ENCODE measurements at regions of chr1 and their contacts with region 1.

Region 1: DNA sequence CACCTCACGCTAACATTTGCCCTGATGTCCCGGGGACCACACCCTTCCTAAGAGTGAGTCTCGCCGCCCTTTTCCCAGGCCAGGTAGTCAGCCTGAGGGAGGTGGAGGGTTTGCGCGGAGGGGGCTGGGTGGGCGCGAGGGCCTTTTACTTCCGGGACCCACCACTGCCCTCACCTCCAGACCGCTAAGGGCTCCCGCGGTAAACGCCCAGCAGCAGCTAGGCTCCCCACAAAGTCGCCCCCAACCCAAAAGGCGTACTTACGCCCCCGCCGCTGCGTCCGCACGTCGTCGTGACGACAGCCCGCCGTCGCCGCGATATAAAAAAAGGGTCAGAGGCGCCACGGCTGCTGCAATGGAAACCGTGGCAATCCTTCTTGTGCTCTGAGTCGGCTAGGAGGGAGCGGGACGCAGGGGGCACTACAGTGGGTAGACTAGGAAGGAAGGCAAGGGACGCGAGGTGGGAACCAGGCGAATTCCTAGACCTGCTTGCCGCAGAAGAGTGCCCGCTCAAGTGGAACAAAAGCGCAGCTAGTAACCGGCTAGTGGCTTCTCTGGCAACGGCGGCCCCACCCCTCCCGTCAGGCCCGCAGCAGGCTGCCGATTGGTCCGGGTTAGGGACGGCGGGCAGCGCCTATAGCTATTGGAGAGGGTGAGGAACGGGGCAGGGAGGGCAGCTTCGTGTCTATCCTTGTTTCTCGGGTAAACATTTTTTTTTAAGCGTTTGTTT is at the start of gene ODF2L:
- DNase-seq: peak; percentile 94
- ATAC-seq: peak; percentile 100
- H3K4me3 Mint-ChIP-seq: peak within 1 kb of the TSS; percentile 89
- H3K27ac Mint-ChIP-seq: peak within 1 kb of the TSS; percentile 88
- H3K4me1 Mint-ChIP-seq: peaks cover 41% of the 10 kb centered on the region
- H3K27me3 Mint-ChIP-seq: no peaks in the 10 kb centered on the region
- total RNA-seq, gene ODF2L: 18.8 to 27.3 TPM

Region 2: GRCh38 chr1:86197206-86197855 is 198.6 kb before region 1 on chr1:
- CTCF ChIA-PET with region 1: no interaction called
- POLR2A ChIA-PET with region 1: no interaction called
- intact Hi-C with region 1: no loop called
- DNase-seq: no peak
- ATAC-seq: no peak
- H3K4me3 Mint-ChIP-seq: no peak overlapping the region
- H3K27ac Mint-ChIP-seq: no peak overlapping the region
- H3K4me1 Mint-ChIP-seq: no peaks in the 10 kb centered on the region
- H3K27me3 Mint-ChIP-seq: no peaks in the 10 kb centered on the region

Region 3: DNA sequence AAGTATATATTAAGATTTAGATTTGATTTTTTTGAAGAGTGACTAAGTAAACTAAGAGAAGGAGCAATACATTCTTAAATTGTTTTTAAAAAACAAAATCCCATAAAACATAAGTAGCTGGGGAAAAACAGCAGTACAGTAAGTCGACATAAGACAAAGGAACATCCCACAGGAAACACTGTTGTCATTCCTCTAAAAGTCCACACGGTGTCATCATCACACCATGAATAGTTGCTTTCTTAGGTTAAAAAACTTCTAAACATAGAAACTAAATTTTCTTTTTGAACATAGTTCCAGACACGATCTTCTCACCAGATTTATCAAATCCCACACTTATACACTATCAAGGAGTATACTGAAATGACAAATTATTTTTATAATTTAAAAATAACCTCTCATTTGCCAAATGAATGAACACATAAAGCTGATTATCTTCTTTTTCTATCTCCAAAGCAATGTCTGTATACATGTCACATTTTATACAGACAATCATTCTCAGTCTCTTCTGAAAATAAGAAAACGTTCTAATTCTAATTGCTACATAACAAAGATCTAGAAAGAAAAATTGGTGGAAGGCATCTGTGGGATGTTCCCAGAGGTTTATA is 15.6 kb before region 1 on chr1:
- CTCF ChIA-PET with region 1: interaction called, 16 read pairs
- POLR2A ChIA-PET with region 1: no interaction called
- intact Hi-C with region 1: loop called (anchors 1 kb)
- DNase-seq: no peak
- ATAC-seq: peak; percentile 51
- H3K4me3 Mint-ChIP-seq: no peak overlapping the region
- H3K27ac Mint-ChIP-seq: no peak overlapping the region
- H3K4me1 Mint-ChIP-seq: peaks cover 8% of the 10 kb centered on the region
- H3K27me3 Mint-ChIP-seq: no peaks in the 10 kb centered on the region

Region 4: DNA sequence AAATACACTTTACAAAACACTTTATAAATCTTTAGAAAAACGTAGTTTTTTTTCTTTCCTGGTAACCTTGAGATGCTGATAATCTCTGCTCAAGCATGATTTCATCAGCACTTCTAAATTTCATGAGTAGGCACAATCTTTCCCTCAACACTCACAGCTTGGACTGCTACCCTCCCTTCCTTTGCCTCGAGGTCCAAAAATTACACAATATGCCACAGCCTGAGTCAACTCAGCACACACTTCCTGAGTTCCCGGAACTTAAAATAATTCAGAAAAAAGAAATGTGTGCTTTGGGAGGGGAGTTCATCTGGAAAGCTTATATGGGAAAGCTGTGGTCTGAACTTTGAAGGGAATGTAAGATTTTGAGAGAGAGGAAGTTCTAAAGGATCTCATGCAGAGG is 33.9 kb after region 1 on chr1:
- CTCF ChIA-PET with region 1: interaction called, 3 read pairs
- POLR2A ChIA-PET with region 1: no interaction called
- intact Hi-C with region 1: loop called in 1 of 2 experiments (anchors 2 kb)
- DNase-seq: peak; percentile 17
- ATAC-seq: peak; percentile 90
- H3K4me3 Mint-ChIP-seq: no peak overlapping the region
- H3K27ac Mint-ChIP-seq: no peak overlapping the region
- H3K4me1 Mint-ChIP-seq: no peaks in the 10 kb centered on the region
- H3K27me3 Mint-ChIP-seq: peaks cover 5% of the 10 kb centered on the region